Common myeloid progenitor, CD34-positive (primary cell): ENCODE measurements at regions of chr19 and their contacts with region 1.

Region 1: DNA sequence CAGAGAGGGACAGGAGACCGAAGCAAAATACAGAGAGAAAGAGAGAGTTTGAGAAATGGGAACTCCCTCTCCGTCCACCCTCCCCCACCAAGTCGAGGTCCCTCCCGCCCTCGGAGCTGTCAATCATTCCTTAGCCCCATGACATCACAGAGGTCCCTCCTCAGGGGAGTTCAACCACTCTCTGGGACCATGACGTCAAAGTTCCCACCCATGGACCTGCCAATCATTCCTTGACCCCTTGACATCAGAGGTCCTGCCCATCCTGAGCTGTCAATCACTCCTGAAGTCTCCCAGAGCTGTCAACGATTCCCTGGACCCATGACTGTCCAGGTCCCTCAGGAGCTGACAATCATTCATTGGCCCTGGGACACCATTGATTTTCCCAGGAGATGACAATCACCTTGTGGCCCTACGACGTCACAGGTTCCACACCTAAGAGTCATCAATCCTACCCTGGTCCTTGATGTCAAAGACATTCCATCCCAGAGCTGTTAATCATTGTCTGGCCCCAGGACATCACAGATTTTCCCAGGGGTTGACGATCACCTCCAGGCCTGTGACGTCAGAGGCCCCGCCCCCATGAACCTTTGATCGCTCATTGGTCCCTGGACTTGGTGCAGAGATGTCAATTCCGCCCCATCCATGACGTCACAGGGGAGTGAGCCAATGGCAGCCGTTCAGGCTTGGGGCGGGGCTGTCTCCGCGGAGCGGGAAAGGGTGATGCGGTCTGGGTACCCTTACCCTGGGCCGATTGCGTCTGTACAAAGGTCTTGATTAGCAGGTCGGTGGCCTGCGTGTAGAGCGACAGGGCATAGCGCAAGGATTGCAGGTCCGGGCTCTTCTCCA is 61.7 kb downstream of the COLGALT1 start:
- DNase-seq: peak; percentile 49 to 61 (median 60)
- H3K4me3 ChIP-seq: peak overlapping the region in 4 of 7 experiments; percentile 42 to 66 (median 52)
- H3K27ac ChIP-seq: peak overlapping the region in 1 of 2 experiments; percentile 43
- H3K4me1 ChIP-seq: peaks cover 0 to 9% (median 7%) of the 10 kb centered on the region in 4 experiments
- H3K27me3 ChIP-seq: peaks cover 0 to 25% (median 4%) of the 10 kb centered on the region in 5 experiments

Region 2: GRCh38 chr19:17605761-17606745 is 11.1 kb before region 1 on chr19:
- CTCF ChIA-PET with region 1: interaction called, 11 read pairs
- POLR2A ChIA-PET with region 1: no interaction called
- DNase-seq: peak; percentile 92 to 96 (median 95)
- H3K4me3 ChIP-seq: peak overlapping the region in 6 of 7 experiments; percentile 26 to 73 (median 58)
- H3K27ac ChIP-seq: no peak overlapping the region
- H3K4me1 ChIP-seq: peaks cover 0 to 23% (median 18%) of the 10 kb centered on the region in 4 experiments
- H3K27me3 ChIP-seq: peaks cover 0 to 8% (median 0%) of the 10 kb centered on the region in 5 experiments